Gastrocnemius medialis (tissue), 4 donors: ENCODE measurements at regions of chr1 and their contacts with region 1.

Region 1: GRCh38 chr1:184805667-184806295 is 51.1 kb upstream of the EDEM3 start:
- DNase-seq: peak; percentile 82 to 86
- ATAC-seq: peak; percentile 57 to 82
- H3K4me3 ChIP-seq: no peak overlapping the region
- H3K27ac ChIP-seq: peak overlapping the region; percentile 25 to 90 (median 84)
- H3K4me1 ChIP-seq: peaks cover 38 to 43% of the 10 kb centered on the region in 2 donors
- H3K27me3 ChIP-seq: no peaks in the 10 kb centered on the region
- CTCF ChIP-seq: peak; percentile 90 to 95 (median 93)
- POLR2A ChIP-seq: no peak

Region 2: DNA sequence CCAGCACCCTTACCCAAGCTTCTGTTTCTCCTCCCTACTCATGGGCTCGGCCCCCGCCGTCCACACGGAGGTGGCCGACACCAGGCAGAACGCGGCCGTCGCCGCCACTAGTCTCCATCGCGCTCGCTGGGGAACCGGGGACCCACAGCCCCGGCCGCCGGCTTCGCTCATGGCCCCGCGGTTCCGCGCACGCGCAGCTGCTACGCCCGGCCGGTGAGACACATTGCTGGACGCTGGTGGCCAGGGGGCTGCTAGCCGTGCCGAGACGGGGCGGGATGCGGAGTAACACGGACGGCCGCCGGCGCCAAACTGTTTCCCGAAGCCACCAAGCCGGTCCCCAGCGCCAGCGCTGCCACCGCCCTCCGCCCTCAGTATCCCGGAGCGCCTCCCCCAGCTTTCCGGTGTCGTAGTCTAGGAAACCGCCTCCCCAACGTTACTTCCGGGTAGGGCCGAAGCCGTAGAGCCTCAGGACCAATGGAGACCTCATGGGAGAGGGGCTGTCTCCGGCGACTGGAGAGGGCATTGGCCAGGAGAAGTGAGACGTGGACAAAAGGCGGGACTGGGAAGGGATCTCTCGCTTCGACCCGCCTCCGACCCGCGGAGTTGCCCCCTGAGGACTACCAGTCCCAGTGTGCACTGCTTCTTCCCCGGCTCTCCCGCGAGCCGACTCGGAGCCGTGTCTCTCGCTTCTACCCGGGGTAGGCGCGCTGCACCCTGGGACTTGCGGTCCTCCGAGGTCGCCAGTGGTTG is 51.1 kb before region 1 on chr1 and contains the start of gene EDEM3:
- in situ Hi-C with region 1: loop called in 1 of 4 experiments (anchors 10 kb)
- intact Hi-C with region 1: loop called (anchors 2 kb)
- DNase-seq: peak; percentile 99 to 100
- ATAC-seq: peak; percentile 97
- H3K4me3 ChIP-seq: peak within 1 kb of the TSS; percentile 94 to 97 (median 96)
- H3K27ac ChIP-seq: peak within 1 kb of the TSS; percentile 93 to 99 (median 96)
- H3K4me1 ChIP-seq: peaks cover 16 to 17% of the 10 kb centered on the region in 2 donors
- H3K27me3 ChIP-seq: no peaks in the 10 kb centered on the region
- CTCF ChIP-seq: peak in 1 of 5 experiments; percentile 15
- POLR2A ChIP-seq: peak; percentile 98
- total RNA-seq, gene EDEM3: 18.1 to 51.1 (median 31.9) TPM

Region 3: GRCh38 chr1:184892116-184892515 is 86.3 kb after region 1 on chr1:
- in situ Hi-C with region 1: no loop called
- intact Hi-C with region 1: loop called (anchors 2 kb)
- DNase-seq: no peak
- ATAC-seq: no peak
- H3K4me3 ChIP-seq: no peak overlapping the region
- H3K27ac ChIP-seq: peak overlapping the region in 3 of 4 donors; percentile 5 to 57 (median 27)
- H3K4me1 ChIP-seq: peaks cover 32 to 53% of the 10 kb centered on the region in 2 donors
- H3K27me3 ChIP-seq: no peaks in the 10 kb centered on the region
- CTCF ChIP-seq: no peak
- POLR2A ChIP-seq: no peak

Region 4: GRCh38 chr1:184982002-184982954 is 176.5 kb after region 1 on chr1:
- in situ Hi-C with region 1: loop called (anchors 5 kb)
- intact Hi-C with region 1: loop called (anchors 1 kb)
- DNase-seq: peak; percentile 60 to 71
- ATAC-seq: peak; percentile 93 to 99
- H3K4me3 ChIP-seq: no peak overlapping the region
- H3K27ac ChIP-seq: no peak overlapping the region
- H3K4me1 ChIP-seq: peaks cover 6% of the 10 kb centered on the region in 2 donors
- H3K27me3 ChIP-seq: no peaks in the 10 kb centered on the region
- CTCF ChIP-seq: peak; percentile 89 to 96 (median 93)
- POLR2A ChIP-seq: no peak

Region 5: DNA sequence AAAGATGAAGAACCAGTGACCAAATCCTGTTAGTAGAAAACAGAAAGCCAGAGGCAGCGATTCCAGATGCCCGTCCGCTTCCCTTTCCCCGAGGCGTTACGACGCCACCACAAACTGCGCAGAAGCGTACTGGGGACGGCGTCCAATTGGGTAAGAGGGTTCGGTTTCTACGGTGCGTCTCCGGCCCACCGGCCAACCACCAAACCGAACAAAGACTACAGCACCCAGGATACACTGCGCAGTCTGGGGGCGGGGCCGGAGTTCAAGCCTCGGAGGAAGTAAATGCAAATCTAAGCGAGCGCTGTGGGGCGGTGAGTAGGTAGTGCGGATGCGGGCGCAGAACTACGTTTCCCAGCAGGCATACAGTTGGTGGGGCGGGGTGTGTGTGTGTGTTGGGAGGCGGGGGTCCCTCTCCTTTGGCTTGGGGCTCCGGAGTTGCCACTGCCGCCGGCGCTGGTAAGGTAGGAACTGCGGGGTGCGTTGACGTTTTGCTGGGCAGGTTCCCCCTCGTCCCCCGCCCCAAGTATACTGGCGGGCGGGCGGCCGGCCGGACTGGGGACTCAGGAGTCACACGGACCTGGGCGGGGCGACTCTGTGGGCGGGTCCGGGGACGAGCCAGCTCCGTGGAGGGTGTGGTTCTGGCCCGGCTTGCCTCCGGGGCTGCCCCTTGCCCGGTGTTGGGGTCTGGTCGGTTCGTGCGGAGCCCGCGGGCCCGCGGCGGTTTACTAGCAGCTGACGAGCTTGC is 351.2 kb after region 1 on chr1 and contains the starts of genes SWT1 and TRMT1L:
- in situ Hi-C with region 1: no loop called
- intact Hi-C with region 1: loop called (anchors 5 kb)
- DNase-seq: peak; percentile 99 to 100
- ATAC-seq: peak; percentile 94 to 96
- H3K4me3 ChIP-seq: peak within 1 kb of the TSS; percentile 75 to 99 (median 96)
- H3K27ac ChIP-seq: peak within 1 kb of the TSS; percentile 93 to 99 (median 98)
- H3K4me1 ChIP-seq: peaks cover 25 to 36% of the 10 kb centered on the region in 2 donors
- H3K27me3 ChIP-seq: no peaks in the 10 kb centered on the region
- CTCF ChIP-seq: no peak
- POLR2A ChIP-seq: peak; percentile 94 to 95
- total RNA-seq, gene SWT1: 3.4 to 6.2 (median 4.6) TPM
- total RNA-seq, gene TRMT1L: 24.9 to 42.8 (median 30.0) TPM